ENCODE measurements at regions of chr18 and their contacts with region 1.

Region 1: GRCh38 chr18:59056706-59057492 is 82.8 kb upstream of the SEC11C start:
- DNase-seq: peak; percentile 92
- ATAC-seq: peak; percentile 75

Region 2: DNA sequence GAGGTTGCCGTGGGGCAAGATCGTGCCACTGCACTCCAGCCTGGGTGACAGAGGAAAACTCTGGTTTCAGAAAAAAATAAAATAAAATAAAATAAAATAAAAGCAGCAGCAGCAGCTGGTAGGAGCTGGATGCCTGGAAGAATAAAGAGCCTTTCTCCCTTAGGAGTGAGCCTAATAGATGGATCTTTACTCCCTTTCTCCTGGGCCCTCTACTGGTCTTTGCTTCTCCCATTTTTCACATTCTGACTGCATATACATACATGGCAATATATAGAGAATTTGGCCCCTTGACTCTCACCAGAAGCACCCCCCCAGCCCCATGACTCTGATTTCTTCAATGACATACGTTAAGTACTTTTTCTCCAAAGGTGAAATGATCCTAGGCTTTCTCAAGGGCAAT is 395.5 kb before region 1 on chr18:
- intact Hi-C with region 1: no loop called
- DNase-seq: no peak
- ATAC-seq: no peak

Region 3: GRCh38 chr18:58781627-58782194 is 275.2 kb before region 1 on chr18:
- intact Hi-C with region 1: loop called (anchors 2 kb)
- DNase-seq: peak; percentile 87
- ATAC-seq: peak; percentile 93

Region 4: GRCh38 chr18:58863539-58864145 is 193.3 kb before region 1 on chr18:
- intact Hi-C with region 1: loop called (anchors 10 kb)
- DNase-seq: peak; percentile 77
- ATAC-seq: peak; percentile 61

Region 5: DNA sequence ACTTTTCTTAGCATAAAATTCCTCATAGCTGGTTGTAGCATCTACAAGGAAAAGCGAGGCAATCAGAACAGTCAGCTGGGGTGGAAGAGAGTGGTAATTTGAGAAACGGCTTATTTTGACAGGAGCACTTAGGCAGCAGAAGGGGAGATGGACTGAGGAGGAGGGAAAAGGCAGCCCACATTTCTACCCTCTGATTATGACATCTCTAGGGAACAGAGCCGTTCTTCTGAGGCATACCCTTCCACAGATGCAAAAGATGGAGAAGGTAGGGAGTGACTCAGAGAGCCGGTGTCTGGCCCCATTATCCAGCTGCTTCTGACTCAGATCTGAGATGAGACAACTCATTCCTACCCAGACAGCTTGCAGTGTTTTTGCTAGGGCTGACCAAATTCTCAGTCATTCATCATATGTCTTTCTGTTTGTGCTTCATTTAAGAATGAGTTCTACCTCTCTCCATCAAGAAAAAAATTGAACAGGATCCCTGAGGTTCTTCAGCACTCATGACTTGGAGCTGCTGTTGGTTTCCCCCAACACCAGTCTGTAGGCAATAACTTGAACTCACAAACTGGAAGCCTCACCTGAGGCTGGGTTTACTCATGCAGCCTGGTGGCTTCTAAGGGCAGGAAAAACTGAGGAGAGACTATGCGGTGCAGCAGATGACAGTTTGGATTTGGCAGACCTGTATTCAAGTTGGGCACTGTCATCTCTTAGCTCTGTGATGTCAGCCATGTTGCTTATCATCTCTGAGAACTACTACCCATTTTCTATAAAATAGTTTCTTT is 66.9 kb after region 1 on chr18:
- intact Hi-C with region 1: no loop called
- DNase-seq: no peak
- ATAC-seq: no peak

Measured in sciatic nerve (tissue), 2 donors.